ENCODE measurements at regions of chr19 and their contacts with region 1.

Region 1: DNA sequence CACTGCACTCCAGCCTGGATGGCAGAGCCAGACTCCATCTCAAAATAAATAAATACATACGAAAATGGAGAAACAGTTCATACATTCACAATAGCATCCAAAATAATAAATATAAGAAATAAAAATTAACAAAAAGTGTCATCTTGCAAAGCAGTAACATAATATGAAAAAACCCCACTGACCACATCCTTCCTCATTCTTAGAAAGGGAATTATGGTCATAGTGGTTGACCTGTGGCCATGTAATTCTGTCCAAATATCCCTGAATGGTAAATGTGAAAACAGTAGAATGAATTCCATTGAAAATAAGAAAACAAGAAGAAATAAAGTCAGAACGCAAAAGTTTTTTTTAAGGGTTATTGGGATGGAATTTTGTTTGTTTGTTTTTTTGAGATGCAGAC is 7.0 kb upstream of the CDC42EP5 start:
- DNase-seq: peak in 1 of 2 experiments; percentile 19
- H3K4me3 ChIP-seq: no peak overlapping the region
- H3K27ac ChIP-seq: no peak overlapping the region
- H3K4me1 ChIP-seq: no peaks in the 10 kb centered on the region
- H3K27me3 ChIP-seq: peaks cover 19% of the 10 kb centered on the region; the same call in 1 of the 2 replicates
- CTCF ChIP-seq: no peak

Region 2: DNA sequence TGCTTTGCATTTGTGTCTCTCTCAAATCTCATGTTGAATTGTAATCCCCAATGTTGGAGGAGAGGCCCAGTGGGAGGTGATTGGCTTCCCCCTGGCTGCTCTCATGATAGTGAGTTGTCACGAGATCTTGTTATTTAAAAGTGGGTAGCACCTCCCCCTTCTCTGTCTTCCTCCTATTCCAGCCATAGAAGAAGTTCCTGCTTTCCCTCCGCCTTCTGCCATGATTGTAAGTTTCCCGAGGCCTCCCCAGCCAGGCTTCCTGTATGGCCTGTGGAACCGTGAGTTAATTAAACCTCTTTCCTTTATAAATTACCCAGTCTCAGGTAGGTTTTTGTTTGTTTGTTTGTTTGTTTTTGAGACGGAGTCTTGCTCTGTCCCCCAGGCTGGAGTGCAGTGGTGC is 144.9 kb before region 1 on chr19:
- CTCF ChIA-PET with region 1: no interaction called
- POLR2A ChIA-PET with region 1: no interaction called
- intact Hi-C with region 1: no loop called
- DNase-seq: no peak
- H3K4me3 ChIP-seq: no peak overlapping the region
- H3K27ac ChIP-seq: no peak overlapping the region
- H3K4me1 ChIP-seq: no peaks in the 10 kb centered on the region
- H3K27me3 ChIP-seq: peaks cover 94% of the 10 kb centered on the region
- CTCF ChIP-seq: no peak

Region 3: GRCh38 chr19:54418030-54418929 is 61.8 kb before region 1 on chr19:
- CTCF ChIA-PET with region 1: no interaction called
- POLR2A ChIA-PET with region 1: no interaction called
- intact Hi-C with region 1: no loop called
- DNase-seq: no peak
- H3K4me3 ChIP-seq: no peak overlapping the region
- H3K27ac ChIP-seq: no peak overlapping the region
- H3K4me1 ChIP-seq: no peaks in the 10 kb centered on the region
- H3K27me3 ChIP-seq: peaks cover 60% of the 10 kb centered on the region
- CTCF ChIP-seq: no peak

Region 4: GRCh38 chr19:54463531-54464043 is 16.5 kb before region 1 on chr19 and contains the start of gene LENG9:
- CTCF ChIA-PET with region 1: no interaction called
- POLR2A ChIA-PET with region 1: no interaction called
- intact Hi-C with region 1: no loop called
- DNase-seq: peak; percentile 97 to 99
- H3K4me3 ChIP-seq: peak within 1 kb of the TSS; percentile 77
- H3K27ac ChIP-seq: peak within 1 kb of the TSS; percentile 89
- H3K4me1 ChIP-seq: peaks cover 18% of the 10 kb centered on the region
- H3K27me3 ChIP-seq: no peaks in the 10 kb centered on the region
- CTCF ChIP-seq: no peak
- total RNA-seq, gene LENG9: 7.0 and 8.9 TPM in 2 replicates

Region 5: DNA sequence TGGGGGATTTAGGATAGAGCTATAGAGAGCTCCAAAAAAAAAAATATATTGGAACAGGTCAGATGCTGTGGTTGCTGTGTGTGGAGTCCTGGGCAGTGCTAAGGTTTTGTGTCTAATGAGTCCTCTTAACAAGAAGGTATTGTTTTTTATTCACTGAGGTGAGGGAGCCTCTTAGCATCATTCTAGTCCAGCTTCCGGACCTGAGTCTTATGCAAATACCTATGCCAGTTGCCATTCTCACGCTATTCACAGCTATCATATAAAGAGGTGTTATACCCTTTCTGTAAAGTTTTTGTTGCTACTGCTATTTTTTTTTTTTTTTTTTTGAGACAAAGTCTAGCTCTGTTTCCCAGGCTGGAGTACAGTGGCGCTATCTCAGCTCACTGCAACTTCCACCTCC is 487.6 kb after region 1 on chr19:
- CTCF ChIA-PET with region 1: interaction called, 17 read pairs
- POLR2A ChIA-PET with region 1: no interaction called
- intact Hi-C with region 1: no loop called
- DNase-seq: no peak
- H3K4me3 ChIP-seq: peak overlapping the region; percentile 59; the same call in 1 of the 2 replicates
- H3K27ac ChIP-seq: no peak overlapping the region
- H3K4me1 ChIP-seq: peaks cover 8% of the 10 kb centered on the region; the same call in 1 of the 2 replicates
- H3K27me3 ChIP-seq: no peaks in the 10 kb centered on the region
- CTCF ChIP-seq: no peak

Measured in PC-9 (cell line).